Activated naive CD4-positive, alpha-beta T cell treated with anti-CD3 and anti-CD28 coated beads for 36 hours (primary cell): ENCODE measurements at regions of chr5 and their contacts with region 1.

Region 1: GRCh38 chr5:126988021-126988569 is 42.3 kb downstream of the MARCHF3 start:
- DNase-seq: peak; percentile 77
- H3K4me3 Mint-ChIP-seq: peak overlapping the region; percentile 20
- H3K27ac Mint-ChIP-seq: peak overlapping the region; percentile 76
- H3K4me1 Mint-ChIP-seq: peaks cover 51% of the 10 kb centered on the region
- H3K27me3 Mint-ChIP-seq: no peaks in the 10 kb centered on the region

Region 2: DNA sequence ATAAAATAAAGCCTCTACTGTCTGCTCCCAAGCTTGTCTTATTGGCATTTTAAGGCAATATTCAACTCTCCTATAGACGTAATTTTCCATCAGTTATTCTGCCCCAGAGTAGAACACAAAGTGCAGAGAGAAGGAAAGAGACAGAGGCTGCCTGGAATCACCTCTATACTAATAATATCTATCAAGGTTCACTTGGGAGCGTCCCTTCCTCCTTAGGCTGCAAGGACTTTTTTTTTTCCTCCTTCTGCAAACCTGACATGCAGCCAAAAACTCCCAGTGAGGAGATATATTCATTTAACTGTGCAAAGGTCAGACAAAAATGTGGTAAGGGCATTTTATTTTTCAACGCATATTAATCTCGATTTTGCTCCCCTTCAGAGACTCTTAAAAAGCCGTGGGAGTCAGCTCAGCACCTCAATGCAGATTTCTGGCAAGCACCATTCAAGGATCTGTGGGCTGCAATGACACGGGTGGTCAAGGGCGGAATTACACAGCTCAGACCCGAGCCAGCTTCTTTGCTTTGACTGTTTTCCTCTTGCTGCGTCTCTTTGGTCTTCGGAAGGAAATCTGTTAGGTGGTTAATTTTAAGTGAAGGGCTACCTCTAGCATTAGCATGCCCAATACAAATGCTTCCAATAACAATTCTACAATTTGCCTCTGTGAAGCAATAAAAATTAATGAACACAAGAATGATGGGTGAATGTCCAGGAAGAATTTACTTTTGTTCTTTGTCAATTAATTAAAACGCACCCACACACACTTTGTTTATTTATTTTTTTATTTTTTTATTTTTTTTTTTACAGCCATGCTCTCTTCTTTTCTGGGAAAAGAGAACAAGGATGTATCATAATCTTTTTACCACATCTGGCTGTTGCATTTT is 1152.6 kb before region 1 on chr5:
- CTCF ChIA-PET with region 1: no interaction called
- intact Hi-C with region 1: no loop called
- DNase-seq: no peak
- H3K4me3 Mint-ChIP-seq: no peak overlapping the region
- H3K27ac Mint-ChIP-seq: no peak overlapping the region
- H3K4me1 Mint-ChIP-seq: no peaks in the 10 kb centered on the region
- H3K27me3 Mint-ChIP-seq: no peaks in the 10 kb centered on the region

Region 3: GRCh38 chr5:126757713-126758357 is 230.3 kb before region 1 on chr5:
- CTCF ChIA-PET with region 1: no interaction called
- intact Hi-C with region 1: loop called (anchors 1 kb)
- DNase-seq: no peak
- H3K4me3 Mint-ChIP-seq: no peak overlapping the region
- H3K27ac Mint-ChIP-seq: peak overlapping the region; percentile 54
- H3K4me1 Mint-ChIP-seq: peaks cover 44% of the 10 kb centered on the region
- H3K27me3 Mint-ChIP-seq: no peaks in the 10 kb centered on the region

Region 4: GRCh38 chr5:126972062-126972895 is 15.8 kb before region 1 on chr5:
- CTCF ChIA-PET with region 1: interaction called, 6 read pairs
- intact Hi-C with region 1: loop called (anchors 1 kb)
- DNase-seq: peak; percentile 45
- H3K4me3 Mint-ChIP-seq: peak overlapping the region; percentile 70
- H3K27ac Mint-ChIP-seq: peak overlapping the region; percentile 94
- H3K4me1 Mint-ChIP-seq: peaks cover 37% of the 10 kb centered on the region
- H3K27me3 Mint-ChIP-seq: no peaks in the 10 kb centered on the region

Region 5: DNA sequence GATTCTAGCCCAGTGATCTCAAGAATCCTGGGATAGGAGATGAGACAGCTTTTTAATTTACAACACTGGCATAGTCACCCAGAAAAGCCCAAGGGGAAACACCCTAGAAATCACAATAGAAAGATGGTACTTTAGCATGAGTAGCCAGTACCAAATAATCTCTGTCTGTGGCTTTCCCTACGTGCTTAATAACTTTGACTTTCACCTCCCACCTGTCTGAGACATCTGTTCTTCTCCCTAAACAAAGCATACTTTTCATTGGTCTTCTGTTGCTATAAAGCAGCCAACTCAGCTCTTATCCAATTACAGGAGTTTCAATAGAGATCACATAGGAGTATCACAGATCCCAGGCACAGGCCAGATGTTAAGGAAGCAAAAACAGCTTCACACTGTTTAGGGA is 31.8 kb after region 1 on chr5:
- CTCF ChIA-PET with region 1: no interaction called
- intact Hi-C with region 1: loop called (anchors 1 kb)
- DNase-seq: no peak
- H3K4me3 Mint-ChIP-seq: no peak overlapping the region
- H3K27ac Mint-ChIP-seq: no peak overlapping the region
- H3K4me1 Mint-ChIP-seq: peaks cover 23% of the 10 kb centered on the region
- H3K27me3 Mint-ChIP-seq: no peaks in the 10 kb centered on the region

Region 6: DNA sequence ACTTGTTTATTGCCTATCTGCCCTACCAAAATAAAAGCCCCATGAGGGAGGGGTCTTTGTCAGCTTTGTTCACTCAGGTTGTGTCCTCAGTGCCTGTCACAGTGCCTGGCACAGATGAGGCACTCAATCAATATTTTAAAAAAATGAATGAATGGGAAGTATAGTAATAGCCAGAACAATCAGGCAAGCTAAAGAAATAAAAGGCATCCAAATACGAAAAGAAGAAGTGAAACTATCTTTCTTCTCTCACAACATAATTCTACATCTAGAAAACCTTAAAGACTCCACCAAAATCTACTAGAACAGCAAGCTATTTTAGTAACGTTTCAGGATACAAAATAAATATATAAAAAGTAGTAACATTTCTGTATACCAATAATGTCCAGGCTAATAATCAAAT is 123.0 kb after region 1 on chr5:
- CTCF ChIA-PET with region 1: no interaction called
- intact Hi-C with region 1: no loop called
- DNase-seq: no peak
- H3K4me3 Mint-ChIP-seq: no peak overlapping the region
- H3K27ac Mint-ChIP-seq: no peak overlapping the region
- H3K4me1 Mint-ChIP-seq: no peaks in the 10 kb centered on the region
- H3K27me3 Mint-ChIP-seq: peaks cover 6% of the 10 kb centered on the region